Right ventricle myocardium superior (tissue), 1 donor: ENCODE measurements at regions of chr13 and their contacts with region 1.

Region 1: GRCh38 chr13:91187522-91187921 is 160.0 kb upstream of the MIR17HG start:
- DNase-seq: no peak
- ATAC-seq: no peak

Region 2: DNA sequence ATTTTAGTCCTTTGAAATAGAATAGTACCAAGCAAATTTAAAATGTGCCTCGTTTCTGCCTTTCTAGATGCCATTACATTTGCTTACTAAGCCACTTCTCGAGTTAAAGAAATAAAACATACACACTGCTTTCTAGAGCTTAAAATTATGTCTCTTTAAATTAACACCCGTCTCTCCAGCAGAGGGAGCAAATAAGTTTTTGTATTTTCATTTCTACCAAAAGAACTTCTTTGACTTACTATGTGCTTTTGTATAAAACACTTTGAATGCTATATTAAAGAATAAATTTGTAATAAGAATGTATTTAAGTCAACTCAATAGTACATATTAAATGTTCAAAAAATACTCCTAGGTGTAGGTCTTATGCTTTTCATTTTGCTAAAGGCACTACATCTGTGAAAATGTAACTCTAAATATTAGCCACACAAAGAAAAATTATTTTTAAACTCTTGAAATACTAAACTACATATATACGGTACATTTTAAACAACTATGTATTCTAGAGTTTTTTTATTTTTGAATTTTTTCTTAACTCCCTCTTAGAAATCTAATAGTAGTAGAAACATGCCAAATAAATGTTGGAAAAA is 109.3 kb before region 1 on chr13:
- intact Hi-C with region 1: no loop called
- DNase-seq: no peak
- ATAC-seq: no peak

Region 3: GRCh38 chr13:91133941-91134802 is 53.4 kb before region 1 on chr13:
- intact Hi-C with region 1: loop called (anchors 2 kb)
- DNase-seq: no peak
- ATAC-seq: peak; percentile 84

Region 4: DNA sequence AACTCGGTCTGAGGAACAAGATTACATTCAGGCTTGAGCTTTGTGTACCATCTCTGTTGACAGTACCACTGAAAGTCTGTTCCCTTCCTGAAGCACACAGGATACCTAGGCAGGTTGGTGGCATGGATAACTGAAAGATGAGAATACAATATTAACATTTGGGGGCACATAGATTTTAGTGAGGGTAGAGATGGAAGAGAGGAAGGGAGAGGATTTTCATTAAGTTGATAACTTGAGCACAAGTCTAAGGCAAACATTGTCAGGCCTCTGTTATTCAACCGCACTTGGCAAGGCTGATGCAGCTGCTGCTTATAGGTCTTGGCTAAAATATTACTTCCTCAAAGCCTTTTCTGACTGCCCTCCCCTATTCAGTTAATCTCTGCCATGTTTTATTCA is 170.9 kb after region 1 on chr13:
- intact Hi-C with region 1: no loop called
- DNase-seq: no peak
- ATAC-seq: no peak